ENCODE measurements at regions of chr18 and their contacts with region 1.

Region 1: GRCh38 chr18:52288403-52289004 is 51.5 kb upstream of the DCC start:
- DNase-seq: peak; percentile 26
- CTCF ChIP-seq: peak; percentile 87

Region 2: DNA sequence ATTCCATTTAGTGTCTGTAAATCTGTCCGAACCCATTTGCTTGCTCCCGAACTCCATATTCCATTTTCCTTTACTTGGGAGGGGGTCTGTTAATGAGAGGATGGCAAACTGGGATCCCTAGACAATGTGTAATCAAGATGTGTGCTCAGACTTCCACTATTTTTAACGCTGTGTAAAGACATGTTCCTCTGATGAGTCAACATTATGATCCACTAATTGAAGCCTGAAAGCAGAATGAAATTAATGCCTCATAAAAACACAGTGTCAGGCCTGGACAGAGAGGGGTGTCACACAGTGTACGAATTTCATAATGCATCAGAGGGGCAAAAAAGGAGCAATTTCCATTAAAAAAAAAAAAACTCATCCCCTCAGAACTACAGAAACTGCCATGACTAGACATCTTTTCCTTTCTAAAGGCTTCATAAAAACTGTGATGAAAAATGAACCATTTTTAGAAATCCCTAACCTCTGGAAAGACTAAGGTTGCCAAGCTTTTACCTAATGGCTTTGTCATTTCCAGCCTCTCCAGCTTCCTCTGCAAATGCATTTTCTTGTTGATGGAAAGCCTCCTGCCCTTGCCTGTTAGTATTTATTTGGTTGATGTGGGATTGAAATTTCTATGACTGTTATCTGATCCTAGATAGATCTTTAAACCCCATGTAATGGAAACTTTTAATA is 157.7 kb before region 1 on chr18:
- CTCF ChIA-PET with region 1: no interaction called
- POLR2A ChIA-PET with region 1: no interaction called
- DNase-seq: no peak
- CTCF ChIP-seq: no peak

Region 3: DNA sequence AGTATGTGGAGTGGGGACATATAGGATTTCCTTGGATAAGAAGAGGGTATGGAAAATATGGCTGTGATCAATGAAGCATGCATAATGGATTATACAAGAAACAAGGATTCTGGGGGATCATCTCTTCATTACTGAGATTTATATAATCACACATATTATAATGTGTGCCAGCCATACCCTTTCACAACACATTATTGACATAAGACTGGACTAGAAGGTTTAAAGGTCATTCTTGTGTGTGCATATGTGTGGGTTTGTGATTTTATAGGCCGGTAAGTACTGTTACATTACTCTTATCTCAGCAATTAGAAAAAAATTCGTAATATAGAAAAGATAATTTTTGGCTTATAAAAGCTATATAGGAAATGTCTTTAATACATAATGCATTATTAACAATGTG is 10.7 kb before region 1 on chr18:
- CTCF ChIA-PET with region 1: interaction called, 13 read pairs
- POLR2A ChIA-PET with region 1: no interaction called
- DNase-seq: no peak
- CTCF ChIP-seq: no peak